CD4-positive, alpha-beta memory T cell (primary cell): ENCODE measurements at regions of chrX and their contacts with region 1.

Region 1: GRCh38 chrX:11533211-11533651 is 132.5 kb downstream of the ARHGAP6 start:
- DNase-seq: peak in 4 of 5 donors; percentile 69 to 81 (median 75)
- H3K4me3 ChIP-seq: no peak overlapping the region
- H3K4me3 Mint-ChIP-seq: no peak overlapping the region
- H3K27ac ChIP-seq: no peak overlapping the region
- H3K27ac Mint-ChIP-seq: no peak overlapping the region
- H3K4me1 ChIP-seq: no peaks in the 10 kb centered on the region
- H3K4me1 Mint-ChIP-seq: no peaks in the 10 kb centered on the region
- H3K27me3 ChIP-seq: no peaks in the 10 kb centered on the region
- H3K27me3 Mint-ChIP-seq: no peaks in the 10 kb centered on the region

Region 2: GRCh38 chrX:11724122-11725017 is 191.1 kb after region 1 on chrX:
- CTCF ChIA-PET with region 1: no interaction called
- POLR2A ChIA-PET with region 1: no interaction called
- intact Hi-C with region 1: loop called (anchors 1 kb)
- DNase-seq: peak in 4 of 5 donors; percentile 17 to 33 (median 23)
- H3K4me3 ChIP-seq: no peak overlapping the region
- H3K4me3 Mint-ChIP-seq: peak overlapping the region in 1 of 8 donors; percentile 10
- H3K27ac ChIP-seq: no peak overlapping the region
- H3K27ac Mint-ChIP-seq: no peak overlapping the region
- H3K4me1 ChIP-seq: no peaks in the 10 kb centered on the region
- H3K4me1 Mint-ChIP-seq: no peaks in the 10 kb centered on the region
- H3K27me3 ChIP-seq: no peaks in the 10 kb centered on the region
- H3K27me3 Mint-ChIP-seq: peaks cover 0 to 2% of the 10 kb centered on the region in 2 donors

Region 3: GRCh38 chrX:11770320-11770719 is 237.1 kb after region 1 on chrX:
- CTCF ChIA-PET with region 1: interaction called, 11 read pairs
- POLR2A ChIA-PET with region 1: no interaction called
- intact Hi-C with region 1: loop called (anchors 1 kb)
- DNase-seq: peak; percentile 65 to 70 (median 69)
- H3K4me3 ChIP-seq: no peak overlapping the region
- H3K4me3 Mint-ChIP-seq: no peak overlapping the region
- H3K27ac ChIP-seq: no peak overlapping the region
- H3K27ac Mint-ChIP-seq: peak overlapping the region; percentile 54 to 91 (median 82)
- H3K4me1 ChIP-seq: peaks cover 37% of the 10 kb centered on the region
- H3K4me1 Mint-ChIP-seq: peaks cover 17 to 36% (median 28%) of the 10 kb centered on the region in 4 donors
- H3K27me3 ChIP-seq: no peaks in the 10 kb centered on the region
- H3K27me3 Mint-ChIP-seq: no peaks in the 10 kb centered on the region

Region 4: DNA sequence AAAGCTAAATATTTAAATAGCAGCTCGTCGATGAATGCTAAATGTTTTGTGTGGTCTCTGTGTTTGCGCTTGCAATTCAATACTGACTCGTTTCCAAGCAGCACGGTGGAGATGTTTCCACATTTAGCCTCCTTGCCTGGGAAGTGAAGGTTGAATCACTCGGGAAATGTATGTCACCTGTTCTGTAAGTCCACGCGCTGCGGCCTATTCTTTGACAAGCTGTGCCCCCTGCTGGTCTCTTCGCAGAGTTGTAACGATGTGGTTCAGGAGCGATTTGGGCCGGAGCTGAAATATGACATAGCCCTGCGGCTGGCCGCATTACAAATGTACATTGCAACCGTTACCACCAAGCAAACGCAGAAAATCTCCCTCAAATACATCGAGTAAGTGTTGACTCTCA is 1168.4 kb after region 1 on chrX:
- CTCF ChIA-PET with region 1: no interaction called
- POLR2A ChIA-PET with region 1: no interaction called
- intact Hi-C with region 1: loop called (anchors 5 kb)
- DNase-seq: peak in 1 of 5 donors; percentile 1
- H3K4me3 ChIP-seq: no peak overlapping the region
- H3K4me3 Mint-ChIP-seq: no peak overlapping the region
- H3K27ac ChIP-seq: no peak overlapping the region
- H3K27ac Mint-ChIP-seq: peak overlapping the region in 1 of 7 donors; percentile 19
- H3K4me1 ChIP-seq: no peaks in the 10 kb centered on the region
- H3K4me1 Mint-ChIP-seq: no peaks in the 10 kb centered on the region
- H3K27me3 ChIP-seq: no peaks in the 10 kb centered on the region
- H3K27me3 Mint-ChIP-seq: peaks cover 8 to 11% of the 10 kb centered on the region in 2 donors